Colonic mucosa (tissue), 4 donors: ENCODE measurements at regions of chr10 and their contacts with region 1.

Region 1: DNA sequence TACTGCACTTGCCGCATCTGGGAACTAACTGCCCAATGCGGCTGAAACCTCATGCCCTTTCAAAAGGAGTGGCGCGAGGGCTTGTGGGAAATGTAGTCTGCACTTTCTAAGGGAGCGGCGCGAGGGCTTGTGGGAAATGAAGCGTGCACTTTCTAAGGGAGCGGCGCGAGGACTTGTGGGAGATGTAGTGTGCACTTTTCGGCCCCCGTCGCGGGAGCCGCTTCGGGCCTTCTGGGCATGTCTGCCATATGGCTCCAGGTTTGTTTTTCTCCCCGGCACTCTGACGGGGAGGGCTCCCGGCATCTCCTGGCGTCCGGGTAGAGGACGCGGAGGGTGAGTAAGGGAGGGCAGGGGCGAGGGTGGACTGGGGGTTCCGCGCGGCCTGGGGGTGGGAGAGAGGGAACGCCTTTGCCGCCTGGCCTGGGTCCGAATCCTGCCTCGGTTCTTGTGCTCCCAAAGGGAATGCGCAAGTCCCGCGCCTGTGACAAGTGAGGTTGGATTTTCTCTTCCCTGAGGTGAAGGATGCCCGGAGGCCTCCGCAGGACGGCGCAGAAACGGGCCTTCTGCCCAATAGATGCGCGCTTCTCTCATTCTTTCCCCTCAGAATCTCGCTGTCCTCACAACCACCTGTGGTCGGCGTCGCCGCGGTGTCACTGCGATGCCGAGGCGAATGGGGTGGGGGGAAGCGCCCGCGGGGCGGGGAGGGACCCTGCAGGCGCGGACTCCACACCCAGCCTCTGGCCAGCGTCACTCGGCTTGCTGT is at the start of gene ZNF37A:
- DNase-seq: peak; percentile 96
- H3K4me3 ChIP-seq: peak within 1 kb of the TSS; percentile 90
- H3K27ac ChIP-seq: peak within 1 kb of the TSS; percentile 87
- H3K4me1 ChIP-seq: no peaks in the 10 kb centered on the region
- H3K27me3 ChIP-seq: no peaks in the 10 kb centered on the region
- CTCF ChIP-seq: no peak
- total RNA-seq, gene ZNF37A: 8.3 to 9.1 TPM

Region 2: DNA sequence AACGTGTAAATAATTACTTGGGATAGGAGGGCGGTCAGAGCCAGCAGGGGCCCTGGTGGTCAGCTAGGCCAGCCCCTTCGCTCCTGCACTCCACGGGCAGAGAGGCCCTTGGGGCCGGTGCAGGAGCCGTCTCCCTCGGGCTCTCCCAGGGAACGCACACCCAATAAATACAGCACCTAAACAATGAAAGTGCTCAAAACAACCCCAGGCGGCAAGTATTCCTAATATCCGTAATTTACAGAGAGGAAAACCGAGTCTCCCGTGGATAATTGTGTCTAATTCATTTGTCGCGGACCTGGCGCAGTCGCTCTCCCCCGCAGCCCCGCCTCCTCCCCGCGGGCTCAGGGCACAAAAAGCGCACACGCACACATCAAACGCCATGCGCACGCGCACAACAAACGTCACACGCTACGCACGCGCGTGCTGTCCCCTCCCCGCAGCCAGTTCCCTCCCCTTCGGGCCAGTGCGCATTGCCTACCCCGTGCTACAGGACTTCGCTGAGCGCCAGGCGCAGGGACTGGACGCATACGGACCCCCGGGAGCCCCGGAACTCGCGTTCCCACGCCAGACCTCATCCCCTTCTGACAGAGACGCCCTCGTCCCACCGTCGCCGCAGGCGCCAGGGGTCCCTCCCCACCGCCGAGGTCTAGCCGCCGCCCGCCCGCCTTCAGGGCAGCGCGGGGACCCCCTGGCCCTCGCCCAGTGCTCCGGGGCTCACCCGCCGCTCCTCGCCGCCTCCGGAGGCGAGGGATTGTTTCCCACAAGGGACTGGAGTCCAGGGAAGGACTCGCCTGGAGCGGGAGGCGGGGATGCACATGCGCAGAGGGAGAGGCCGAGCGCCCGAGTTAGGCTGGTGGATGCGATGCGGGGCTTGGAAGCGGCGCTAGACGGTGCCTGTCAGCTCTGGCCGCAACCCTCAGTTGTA is 236.8 kb before region 1 on chr10 and contains the start of gene ZNF248:
- intact Hi-C with region 1: loop called (anchors 10 kb)
- DNase-seq: peak; percentile 96
- H3K4me3 ChIP-seq: peak within 1 kb of the TSS; percentile 94
- H3K27ac ChIP-seq: peak within 1 kb of the TSS; percentile 100
- H3K4me1 ChIP-seq: peaks cover 5% of the 10 kb centered on the region
- H3K27me3 ChIP-seq: no peaks in the 10 kb centered on the region
- CTCF ChIP-seq: no peak
- total RNA-seq, gene ZNF248: 7.5 to 8.2 TPM

Region 3: GRCh38 chr10:37976091-37976879 is 118.1 kb before region 1 on chr10 and contains the start of gene ZNF25:
- intact Hi-C with region 1: loop called (anchors 5 kb)
- DNase-seq: peak; percentile 99
- H3K4me3 ChIP-seq: peak within 1 kb of the TSS; percentile 84
- H3K27ac ChIP-seq: peak within 1 kb of the TSS; percentile 97
- H3K4me1 ChIP-seq: no peaks in the 10 kb centered on the region
- H3K27me3 ChIP-seq: no peaks in the 10 kb centered on the region
- CTCF ChIP-seq: peak; percentile 89
- total RNA-seq, gene ZNF25: 1.5 to 4.2 TPM

Region 4: GRCh38 chr10:38010119-38010903 is 84.0 kb before region 1 on chr10 and contains the start of gene ZNF33A:
- intact Hi-C with region 1: loop called (anchors 10 kb)
- DNase-seq: peak; percentile 94
- H3K4me3 ChIP-seq: peak within 1 kb of the TSS; percentile 73
- H3K27ac ChIP-seq: peak within 1 kb of the TSS; percentile 99
- H3K4me1 ChIP-seq: no peaks in the 10 kb centered on the region
- H3K27me3 ChIP-seq: no peaks in the 10 kb centered on the region
- CTCF ChIP-seq: no peak
- total RNA-seq, gene ZNF33A: 30.4 to 32.8 TPM